CD4-positive, alpha-beta T cell (primary cell): ENCODE measurements at regions of chr17 and their contacts with region 1.

Region 1: GRCh38 chr17:20315821-20316220 is 151.5 kb downstream of the LGALS9B start:
- DNase-seq: no peak
- ATAC-seq: no peak
- H3K4me3 ChIP-seq: no peak overlapping the region
- H3K4me3 Mint-ChIP-seq: no peak overlapping the region
- H3K27ac ChIP-seq: no peak overlapping the region
- H3K27ac Mint-ChIP-seq: no peak overlapping the region
- H3K4me1 ChIP-seq: peaks cover 6% of the 10 kb centered on the region
- H3K4me1 Mint-ChIP-seq: no peaks in the 10 kb centered on the region
- H3K27me3 ChIP-seq: no peaks in the 10 kb centered on the region
- H3K27me3 Mint-ChIP-seq: no peaks in the 10 kb centered on the region
- CTCF ChIP-seq: no peak

Region 2: GRCh38 chr17:19928299-19928698 is 387.5 kb before region 1 on chr17:
- CTCF ChIA-PET with region 1: no interaction called
- POLR2A ChIA-PET with region 1: no interaction called
- intact Hi-C with region 1: no loop called
- DNase-seq: no peak
- ATAC-seq: no peak
- H3K4me3 ChIP-seq: no peak overlapping the region
- H3K4me3 Mint-ChIP-seq: no peak overlapping the region
- H3K27ac ChIP-seq: no peak overlapping the region
- H3K27ac Mint-ChIP-seq: no peak overlapping the region
- H3K4me1 ChIP-seq: no peaks in the 10 kb centered on the region
- H3K4me1 Mint-ChIP-seq: peaks cover 5% of the 10 kb centered on the region
- H3K27me3 ChIP-seq: no peaks in the 10 kb centered on the region
- H3K27me3 Mint-ChIP-seq: no peaks in the 10 kb centered on the region
- CTCF ChIP-seq: no peak

Region 3: GRCh38 chr17:20153231-20153630 is 162.6 kb before region 1 on chr17:
- CTCF ChIA-PET with region 1: no interaction called
- POLR2A ChIA-PET with region 1: no interaction called
- intact Hi-C with region 1: no loop called
- DNase-seq: no peak
- ATAC-seq: no peak
- H3K4me3 ChIP-seq: no peak overlapping the region
- H3K4me3 Mint-ChIP-seq: no peak overlapping the region
- H3K27ac ChIP-seq: no peak overlapping the region
- H3K27ac Mint-ChIP-seq: no peak overlapping the region
- H3K4me1 ChIP-seq: peaks cover 18% of the 10 kb centered on the region
- H3K4me1 Mint-ChIP-seq: no peaks in the 10 kb centered on the region
- H3K27me3 ChIP-seq: no peaks in the 10 kb centered on the region
- H3K27me3 Mint-ChIP-seq: no peaks in the 10 kb centered on the region
- CTCF ChIP-seq: no peak

Region 4: GRCh38 chr17:20189302-20189701 is 126.5 kb before region 1 on chr17:
- CTCF ChIA-PET with region 1: no interaction called
- POLR2A ChIA-PET with region 1: no interaction called
- intact Hi-C with region 1: no loop called
- DNase-seq: no peak
- ATAC-seq: no peak
- H3K4me3 ChIP-seq: no peak overlapping the region
- H3K4me3 Mint-ChIP-seq: no peak overlapping the region
- H3K27ac ChIP-seq: no peak overlapping the region
- H3K27ac Mint-ChIP-seq: no peak overlapping the region
- H3K4me1 ChIP-seq: no peaks in the 10 kb centered on the region
- H3K4me1 Mint-ChIP-seq: no peaks in the 10 kb centered on the region
- H3K27me3 ChIP-seq: no peaks in the 10 kb centered on the region
- H3K27me3 Mint-ChIP-seq: no peaks in the 10 kb centered on the region
- CTCF ChIP-seq: no peak

Region 5: DNA sequence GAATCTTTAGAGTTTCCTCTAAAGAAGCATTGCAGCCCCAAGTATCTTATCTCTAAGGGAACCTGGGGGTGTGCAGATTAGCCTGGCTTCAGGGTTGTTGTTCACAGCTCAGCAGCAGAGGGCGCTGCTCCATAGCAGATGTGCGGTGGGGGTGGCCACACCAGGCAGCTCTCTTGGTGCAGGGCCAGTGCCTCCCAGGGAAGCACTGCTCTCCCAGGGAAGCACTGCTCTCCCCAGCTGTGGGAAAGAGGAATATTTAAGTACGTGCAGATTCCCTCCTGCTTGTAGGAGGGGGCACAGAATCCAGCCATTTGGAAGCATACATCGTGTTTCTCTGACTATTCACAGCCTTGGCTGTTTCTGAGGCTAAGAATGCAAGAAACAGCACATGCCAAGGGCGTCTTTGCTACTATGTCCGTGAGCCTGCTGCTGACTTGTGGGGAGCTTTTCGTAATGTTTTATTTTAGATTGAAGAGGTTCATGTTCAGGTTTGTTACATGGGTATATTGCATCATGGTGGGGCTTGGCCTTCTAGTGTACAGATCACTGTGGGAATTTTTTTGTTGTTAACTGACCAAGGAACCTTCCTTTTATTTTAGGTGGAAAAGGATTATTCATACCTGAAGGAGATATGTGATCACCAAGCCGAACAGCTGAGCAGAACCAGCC is 88.9 kb before region 1 on chr17:
- CTCF ChIA-PET with region 1: interaction called, 23 read pairs
- POLR2A ChIA-PET with region 1: interaction called, 4 read pairs
- intact Hi-C with region 1: loop called (anchors 1 kb)
- DNase-seq: peak; percentile 66 to 88 (median 74)
- ATAC-seq: peak; percentile 100
- H3K4me3 ChIP-seq: no peak overlapping the region
- H3K4me3 Mint-ChIP-seq: no peak overlapping the region
- H3K27ac ChIP-seq: no peak overlapping the region
- H3K27ac Mint-ChIP-seq: no peak overlapping the region
- H3K4me1 ChIP-seq: peaks cover 6% of the 10 kb centered on the region
- H3K4me1 Mint-ChIP-seq: peaks cover 26% of the 10 kb centered on the region
- H3K27me3 ChIP-seq: no peaks in the 10 kb centered on the region
- H3K27me3 Mint-ChIP-seq: no peaks in the 10 kb centered on the region
- CTCF ChIP-seq: peak; percentile 89

Region 6: DNA sequence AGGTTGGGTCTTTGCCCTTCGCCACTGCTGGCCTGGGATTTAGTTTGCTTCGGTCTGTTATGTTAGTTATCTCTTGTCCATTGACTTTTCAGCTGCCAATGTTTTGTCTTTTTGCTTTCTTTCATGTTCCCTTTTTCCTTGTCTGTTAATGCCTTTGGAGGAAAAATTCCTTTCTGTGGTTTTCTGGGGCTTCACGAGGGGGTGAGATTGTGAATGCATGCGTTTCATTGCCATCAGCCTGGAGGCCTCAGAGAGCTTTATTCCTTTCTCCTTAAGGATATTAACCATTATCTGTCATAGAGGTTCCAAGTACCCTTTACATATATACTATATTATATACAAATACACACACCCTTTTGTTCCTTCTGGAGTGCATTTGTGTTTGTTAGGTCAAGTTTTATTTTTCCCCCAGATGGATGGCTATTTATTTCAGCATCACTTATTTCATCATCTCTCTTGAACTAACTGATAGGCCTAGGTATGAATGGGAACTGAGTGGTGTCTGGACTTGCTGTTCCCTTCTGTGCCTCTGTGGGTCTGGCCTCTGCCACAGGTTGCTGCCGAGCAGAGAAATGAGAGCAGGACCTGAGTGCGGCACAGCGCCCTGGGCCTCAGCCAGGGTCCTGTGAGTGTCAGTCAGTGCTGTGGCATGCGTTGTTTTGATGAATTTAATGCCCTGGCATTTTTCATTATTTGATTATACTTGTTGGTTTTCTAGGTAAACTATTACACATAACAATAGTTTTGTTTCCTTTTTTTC is 41.9 kb before region 1 on chr17:
- CTCF ChIA-PET with region 1: no interaction called
- POLR2A ChIA-PET with region 1: no interaction called
- intact Hi-C with region 1: loop called in 1 of 2 experiments (anchors 5 kb)
- DNase-seq: no peak
- ATAC-seq: peak; percentile 19
- H3K4me3 ChIP-seq: no peak overlapping the region
- H3K4me3 Mint-ChIP-seq: peak overlapping the region; percentile 77
- H3K27ac ChIP-seq: peak overlapping the region in 1 of 2 donors; percentile 27
- H3K27ac Mint-ChIP-seq: peak overlapping the region; percentile 80
- H3K4me1 ChIP-seq: peaks cover 70% of the 10 kb centered on the region
- H3K4me1 Mint-ChIP-seq: peaks cover 99% of the 10 kb centered on the region
- H3K27me3 ChIP-seq: no peaks in the 10 kb centered on the region
- H3K27me3 Mint-ChIP-seq: no peaks in the 10 kb centered on the region
- CTCF ChIP-seq: no peak

Region 7: GRCh38 chr17:20702692-20703091 is 386.9 kb after region 1 on chr17:
- CTCF ChIA-PET with region 1: no interaction called
- POLR2A ChIA-PET with region 1: no interaction called
- intact Hi-C with region 1: no loop called
- DNase-seq: peak in 1 of 14 experiments; percentile 32
- ATAC-seq: no peak
- H3K4me3 ChIP-seq: no peak overlapping the region
- H3K4me3 Mint-ChIP-seq: no peak overlapping the region
- H3K27ac ChIP-seq: no peak overlapping the region
- H3K27ac Mint-ChIP-seq: no peak overlapping the region
- H3K4me1 ChIP-seq: peaks cover 11% of the 10 kb centered on the region
- H3K4me1 Mint-ChIP-seq: peaks cover 23% of the 10 kb centered on the region
- H3K27me3 ChIP-seq: no peaks in the 10 kb centered on the region
- H3K27me3 Mint-ChIP-seq: no peaks in the 10 kb centered on the region
- CTCF ChIP-seq: no peak